PC-9 (cell line): ENCODE measurements at regions of chr12 and their contacts with region 1.

Region 1: DNA sequence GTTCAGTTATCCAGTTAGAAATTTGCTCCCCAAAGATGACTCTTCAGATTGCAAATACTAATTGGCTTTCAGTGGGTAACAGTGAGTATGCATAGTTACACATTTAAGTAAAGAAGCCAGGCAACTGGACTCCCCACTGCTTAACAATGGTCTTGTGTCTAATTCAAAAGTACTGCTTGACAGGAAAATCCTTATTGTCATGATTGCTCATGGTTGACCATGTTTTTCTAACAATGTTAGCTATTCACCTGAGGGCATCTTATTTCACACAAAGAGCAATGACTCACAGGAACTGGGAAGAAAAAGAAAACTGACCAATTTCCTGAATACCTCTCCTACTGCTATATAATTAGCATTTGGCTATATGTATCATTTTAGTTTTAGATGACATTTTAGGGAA is 33.7 kb upstream of the ALG10B start:
- DNase-seq: peak; percentile 24 to 85
- H3K4me3 ChIP-seq: no peak overlapping the region
- H3K27ac ChIP-seq: peak overlapping the region; percentile 64
- H3K4me1 ChIP-seq: peaks cover 23% of the 10 kb centered on the region; the same call in 1 of the 2 replicates
- H3K27me3 ChIP-seq: no peaks in the 10 kb centered on the region
- CTCF ChIP-seq: no peak

Region 2: GRCh38 chr12:38149395-38150286 is 133.2 kb before region 1 on chr12:
- CTCF ChIA-PET with region 1: no interaction called
- POLR2A ChIA-PET with region 1: no interaction called
- intact Hi-C with region 1: loop called (anchors 10 kb)
- DNase-seq: peak; percentile 91 to 93
- H3K4me3 ChIP-seq: no peak overlapping the region; the same call in 1 of the 2 replicates
- H3K27ac ChIP-seq: no peak overlapping the region; the same call in 1 of the 2 replicates
- H3K4me1 ChIP-seq: peaks cover 19% of the 10 kb centered on the region
- H3K27me3 ChIP-seq: peaks cover 12% of the 10 kb centered on the region
- CTCF ChIP-seq: no peak

Region 3: GRCh38 chr12:38324896-38325295 is 42.0 kb after region 1 on chr12:
- CTCF ChIA-PET with region 1: no interaction called
- POLR2A ChIA-PET with region 1: no interaction called
- intact Hi-C with region 1: no loop called
- DNase-seq: no peak
- H3K4me3 ChIP-seq: no peak overlapping the region
- H3K27ac ChIP-seq: no peak overlapping the region
- H3K4me1 ChIP-seq: no peaks in the 10 kb centered on the region
- H3K27me3 ChIP-seq: no peaks in the 10 kb centered on the region
- CTCF ChIP-seq: no peak